ENCODE measurements at regions of chr2 and their contacts with region 1.

Region 1: DNA sequence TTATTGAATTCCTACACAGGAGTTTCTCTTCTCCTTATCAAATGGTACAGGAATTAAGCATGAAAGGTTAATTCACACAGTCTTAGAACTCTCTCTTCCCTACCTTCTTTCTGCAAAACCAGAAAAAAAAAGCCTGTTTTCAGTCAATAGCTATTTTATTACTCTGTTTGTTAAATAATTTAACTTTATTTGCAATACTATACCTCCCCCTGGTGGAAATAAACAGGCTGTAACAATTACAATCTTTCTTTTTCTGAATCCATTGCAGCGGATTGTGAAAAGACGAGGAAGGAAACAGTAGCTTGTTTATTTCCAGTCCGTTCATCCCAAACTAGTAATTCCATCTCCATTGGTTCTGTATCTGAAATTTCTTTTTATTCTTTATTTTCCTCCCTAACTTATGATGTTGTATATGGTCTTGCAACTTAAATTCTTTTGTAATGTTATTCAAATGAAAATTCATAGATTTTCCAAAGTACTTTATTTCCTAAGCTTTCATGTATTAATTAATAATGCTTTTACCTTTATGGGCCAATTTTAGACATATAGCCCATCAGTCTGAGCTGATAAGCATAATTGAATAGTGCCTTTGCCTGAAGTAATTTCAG is 165.2 kb downstream of the SH3BP4 start:
- DNase-seq: peak; percentile 54
- ATAC-seq: no peak
- H3K4me3 ChIP-seq: no peak overlapping the region
- H3K4me3 Mint-ChIP-seq: no peak overlapping the region
- H3K27ac ChIP-seq: no peak overlapping the region
- H3K27ac Mint-ChIP-seq: no peak overlapping the region
- H3K4me1 ChIP-seq: no peaks in the 10 kb centered on the region
- H3K4me1 Mint-ChIP-seq: no peaks in the 10 kb centered on the region
- H3K27me3 ChIP-seq: no peaks in the 10 kb centered on the region
- H3K27me3 Mint-ChIP-seq: peaks cover 4% of the 10 kb centered on the region
- CTCF ChIP-seq: peak; percentile 82

Region 2: DNA sequence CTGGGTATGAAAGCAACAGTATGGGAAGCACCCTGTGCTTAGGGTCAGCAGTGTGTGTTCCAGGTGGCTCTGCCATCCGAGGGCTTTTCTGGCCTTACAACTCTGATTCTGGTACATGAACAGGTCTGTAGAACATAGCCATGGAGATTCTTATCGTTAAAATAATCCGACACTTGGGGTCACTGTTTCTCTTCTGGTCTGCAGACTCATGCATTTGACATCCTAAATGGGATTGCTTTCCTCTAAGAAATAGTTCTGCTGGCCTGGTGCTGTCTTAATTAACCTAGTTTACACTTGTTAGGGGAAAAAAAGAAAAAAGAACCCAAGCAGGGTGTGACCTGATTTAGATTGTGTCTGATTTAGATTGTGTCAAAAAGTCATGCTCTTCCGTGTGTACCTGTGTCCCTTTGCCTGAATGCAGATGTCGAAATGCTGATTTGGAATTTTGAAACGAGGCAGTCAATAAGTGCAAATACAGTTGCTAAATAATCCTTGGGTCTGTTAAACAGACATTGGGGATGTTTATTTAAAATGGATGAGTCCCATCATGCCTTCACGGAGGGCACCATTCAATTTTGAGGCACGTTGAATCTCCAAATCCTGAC is 1140.2 kb before region 1 on chr2:
- CTCF ChIA-PET with region 1: no interaction called
- POLR2A ChIA-PET with region 1: no interaction called
- intact Hi-C with region 1: loop called (anchors 2 kb)
- DNase-seq: peak; percentile 68
- ATAC-seq: no peak
- H3K4me3 ChIP-seq: no peak overlapping the region
- H3K4me3 Mint-ChIP-seq: no peak overlapping the region
- H3K27ac ChIP-seq: no peak overlapping the region
- H3K27ac Mint-ChIP-seq: no peak overlapping the region
- H3K4me1 ChIP-seq: no peaks in the 10 kb centered on the region
- H3K4me1 Mint-ChIP-seq: no peaks in the 10 kb centered on the region
- H3K27me3 ChIP-seq: peaks cover 0 to 20% (median 8%) of the 10 kb centered on the region in 4 experiments
- H3K27me3 Mint-ChIP-seq: peaks cover 61% of the 10 kb centered on the region
- CTCF ChIP-seq: peak; percentile 67

Region 3: DNA sequence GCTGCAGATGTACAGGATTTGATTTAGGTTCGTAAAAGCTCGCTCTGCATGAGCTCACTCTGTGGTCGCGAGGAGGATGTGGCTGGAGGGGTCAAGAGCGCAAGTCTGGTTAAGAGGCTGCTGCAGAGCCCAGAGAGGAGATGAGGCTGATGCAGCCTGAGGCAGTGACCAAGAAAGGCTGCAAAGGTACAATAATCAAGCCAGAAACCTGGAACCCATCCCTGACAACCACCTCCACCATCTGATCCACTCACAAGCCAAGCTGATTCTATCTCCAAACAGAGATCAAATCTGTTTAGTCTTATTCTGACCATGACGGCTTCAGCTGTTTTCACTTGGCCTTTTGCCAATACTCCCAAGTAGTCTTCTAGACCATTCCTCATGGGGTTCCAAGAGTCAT is 561.3 kb before region 1 on chr2:
- CTCF ChIA-PET with region 1: interaction called, 22 read pairs
- POLR2A ChIA-PET with region 1: no interaction called
- intact Hi-C with region 1: loop called (anchors 1 kb)
- DNase-seq: no peak
- ATAC-seq: no peak
- H3K4me3 ChIP-seq: no peak overlapping the region
- H3K4me3 Mint-ChIP-seq: no peak overlapping the region
- H3K27ac ChIP-seq: no peak overlapping the region
- H3K27ac Mint-ChIP-seq: no peak overlapping the region
- H3K4me1 ChIP-seq: peaks cover 10 to 12% of the 10 kb centered on the region in 2 donors
- H3K4me1 Mint-ChIP-seq: peaks cover 18% of the 10 kb centered on the region
- H3K27me3 ChIP-seq: peaks cover 0 to 3% (median 0%) of the 10 kb centered on the region in 4 experiments
- H3K27me3 Mint-ChIP-seq: peaks cover 6% of the 10 kb centered on the region
- CTCF ChIP-seq: no peak

Measured in B cell (primary cell).